ENCODE measurements at regions of chr15 and their contacts with region 1.

Region 1: DNA sequence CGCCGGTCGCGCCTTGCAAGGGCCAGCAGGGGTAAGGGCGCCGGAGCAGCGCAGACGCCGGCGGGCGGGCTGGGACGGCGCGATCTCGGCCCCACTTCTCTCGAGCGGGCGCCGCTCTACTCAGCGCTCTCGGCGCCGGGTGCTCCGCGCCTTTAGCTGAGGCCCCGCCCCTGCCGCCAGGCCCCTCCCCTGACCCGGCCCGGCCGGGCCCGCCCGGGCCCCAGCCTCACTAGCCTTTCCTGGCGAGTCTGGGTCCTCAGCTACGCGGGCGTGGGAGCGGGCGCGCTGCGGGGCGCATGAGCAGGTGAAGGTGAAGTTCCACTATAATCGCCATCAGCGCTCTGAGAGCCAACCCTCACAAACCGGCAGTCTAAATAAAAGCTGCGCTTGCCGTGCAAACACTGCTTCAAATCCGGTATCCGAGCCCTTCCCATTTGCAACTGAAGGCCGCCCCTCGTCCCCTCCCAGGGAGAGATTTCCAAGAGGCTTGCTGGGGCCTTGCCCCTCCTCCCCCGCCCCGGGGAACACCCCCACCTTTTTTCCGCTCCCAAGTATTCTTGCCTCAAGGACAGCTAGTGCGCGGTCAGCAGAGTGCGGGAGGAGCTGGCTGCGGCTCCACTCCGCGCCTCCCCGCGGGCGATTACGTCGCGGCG is at the start of gene RPP25:
- DNase-seq: peak; percentile 86
- ATAC-seq: peak; percentile 79
- H3K4me3 Mint-ChIP-seq: peak within 1 kb of the TSS; percentile 88
- H3K27ac Mint-ChIP-seq: peak within 1 kb of the TSS; percentile 78; the same call in 1 of the 2 replicates
- H3K4me1 Mint-ChIP-seq: peaks cover 39% of the 10 kb centered on the region
- H3K27me3 Mint-ChIP-seq: peaks cover 56% of the 10 kb centered on the region
- CTCF ChIP-seq: no peak
- total RNA-seq, gene RPP25: 28.3 to 31.3 TPM (median 29.0 TPM) in 3 replicates

Region 2: GRCh38 chr15:74762791-74763150 is 194.0 kb before region 1 on chr15:
- CTCF ChIA-PET with region 1: no interaction called
- POLR2A ChIA-PET with region 1: no interaction called
- DNase-seq: no peak
- ATAC-seq: no peak
- H3K4me3 Mint-ChIP-seq: no peak overlapping the region
- H3K27ac Mint-ChIP-seq: 0 out of 2 replicates have a peak overlapping the region, but pooled peaks have one; percentile 12
- H3K4me1 Mint-ChIP-seq: peaks cover 20% of the 10 kb centered on the region
- H3K27me3 Mint-ChIP-seq: peaks cover 3% of the 10 kb centered on the region; the same call in 1 of the 2 replicates
- CTCF ChIP-seq: no peak

Region 3: DNA sequence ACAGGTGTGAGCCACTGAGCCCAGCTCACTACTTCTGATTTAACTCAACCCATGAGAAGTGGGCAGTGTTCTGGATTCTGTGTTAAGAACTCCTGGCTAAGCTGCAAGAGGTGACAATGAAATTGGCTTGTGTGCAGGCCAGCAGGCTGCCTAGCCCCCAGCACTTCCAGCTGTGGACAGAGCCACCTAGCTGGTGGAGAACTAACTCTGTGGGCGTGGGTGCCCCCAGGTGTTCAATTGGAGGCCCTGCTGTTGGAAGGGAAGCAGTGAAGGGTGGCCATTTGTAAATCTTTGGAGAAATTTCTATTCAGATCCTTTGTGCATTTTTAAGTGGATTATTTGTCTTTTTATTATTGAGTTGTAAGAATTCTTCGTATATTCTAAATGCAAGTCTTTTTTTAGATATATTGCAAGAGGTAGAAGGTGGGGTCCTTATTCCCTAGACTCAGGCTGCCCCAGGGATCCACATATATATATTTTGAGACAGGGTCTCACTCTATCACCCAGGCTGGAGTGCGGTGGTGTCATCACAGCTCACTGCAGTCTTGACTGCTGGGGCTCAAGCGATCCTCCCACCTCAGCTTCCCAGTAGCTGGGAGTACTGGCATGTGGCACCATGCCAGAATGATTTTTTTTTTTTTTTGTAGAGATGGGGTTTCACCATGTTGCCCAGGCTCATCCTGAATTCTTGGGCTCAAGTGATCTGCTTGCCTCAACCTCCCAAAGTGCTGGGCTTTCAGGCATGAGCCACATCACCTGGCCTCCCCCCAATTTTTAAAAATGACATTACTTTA is 31.4 kb after region 1 on chr15:
- CTCF ChIA-PET with region 1: interaction called, 20 read pairs
- POLR2A ChIA-PET with region 1: interaction called, 3 read pairs
- DNase-seq: peak; percentile 74
- ATAC-seq: peak; percentile 94
- H3K4me3 Mint-ChIP-seq: no peak overlapping the region
- H3K27ac Mint-ChIP-seq: no peak overlapping the region
- H3K4me1 Mint-ChIP-seq: peaks cover 5% of the 10 kb centered on the region
- H3K27me3 Mint-ChIP-seq: peaks cover 21% of the 10 kb centered on the region
- CTCF ChIP-seq: 0 out of 2 replicates have a peak, but pooled peaks have one; percentile 30

Region 4: DNA sequence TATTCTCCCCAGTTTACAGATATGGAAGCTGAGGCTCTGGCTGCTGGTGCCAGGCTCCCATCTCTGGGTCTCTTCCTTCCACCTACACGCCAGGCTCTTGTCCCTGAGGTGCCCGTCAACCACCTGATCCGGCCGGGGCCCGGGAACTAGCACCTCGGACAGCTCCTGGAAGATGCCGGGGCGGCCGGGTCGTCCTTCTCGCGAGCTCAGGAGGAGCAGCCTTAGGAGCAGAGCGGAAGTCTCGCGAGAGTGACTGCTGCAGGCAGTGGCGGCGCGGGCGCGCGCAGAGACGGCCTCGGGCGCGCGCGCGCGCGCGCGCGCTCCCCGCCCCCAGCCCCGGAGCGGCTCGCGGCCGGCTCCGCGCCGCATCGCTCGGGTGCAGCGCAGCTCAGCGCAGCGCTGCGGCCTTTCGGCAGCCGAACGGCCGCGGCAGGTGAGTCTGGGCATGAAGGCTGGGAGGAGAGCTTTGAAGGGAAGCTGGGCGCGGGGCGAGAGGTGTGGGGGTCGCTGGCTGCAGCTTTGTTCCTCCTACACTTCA is 38.5 kb after region 1 on chr15 and contains the start of gene SCAMP5:
- CTCF ChIA-PET with region 1: interaction called, 15 read pairs
- POLR2A ChIA-PET with region 1: interaction called, 14 read pairs
- DNase-seq: peak; percentile 99
- ATAC-seq: peak; percentile 88
- H3K4me3 Mint-ChIP-seq: peak within 1 kb of the TSS; percentile 79
- H3K27ac Mint-ChIP-seq: no peak within 1 kb of the TSS
- H3K4me1 Mint-ChIP-seq: peaks cover 20% of the 10 kb centered on the region
- H3K27me3 Mint-ChIP-seq: peaks cover 22% of the 10 kb centered on the region
- CTCF ChIP-seq: no peak
- total RNA-seq, gene SCAMP5: 65.7 to 70.1 TPM (median 67.0 TPM) in 3 replicates

Region 5: GRCh38 chr15:75065467-75065850 is 108.7 kb after region 1 on chr15:
- CTCF ChIA-PET with region 1: no interaction called
- POLR2A ChIA-PET with region 1: interaction called, 11 read pairs
- DNase-seq: no peak
- ATAC-seq: peak; percentile 30; the same call in 1 of the 2 replicates
- H3K4me3 Mint-ChIP-seq: no peak overlapping the region
- H3K27ac Mint-ChIP-seq: no peak overlapping the region
- H3K4me1 Mint-ChIP-seq: peaks cover 19% of the 10 kb centered on the region
- H3K27me3 Mint-ChIP-seq: peaks cover 10% of the 10 kb centered on the region
- CTCF ChIP-seq: no peak

Measured in WTC11 (cell line).